Dendritic cell treated with granulocyte-macrophage colony-stimulating factor and Interleukin-4, amounts not matched to agents 40 ng/mL and 50 ng/mL, for 4 days (primary cell): ENCODE measurements at regions of chr6 and their contacts with region 1.

Region 1: GRCh38 chr6:30396833-30397479 is 52.0 kb downstream of the RPP21 start:
- H3K4me3 Mint-ChIP-seq: no peak overlapping the region
- H3K27ac Mint-ChIP-seq: no peak overlapping the region
- H3K4me1 Mint-ChIP-seq: no peaks in the 10 kb centered on the region
- H3K27me3 Mint-ChIP-seq: peaks cover 65% of the 10 kb centered on the region

Region 2: GRCh38 chr6:29964518-29964886 is 432.5 kb before region 1 on chr6:
- intact Hi-C with region 1: no loop called
- H3K4me3 Mint-ChIP-seq: peak overlapping the region; percentile 71
- H3K27ac Mint-ChIP-seq: peak overlapping the region; percentile 87
- H3K4me1 Mint-ChIP-seq: peaks cover 74% of the 10 kb centered on the region
- H3K27me3 Mint-ChIP-seq: no peaks in the 10 kb centered on the region

Region 3: DNA sequence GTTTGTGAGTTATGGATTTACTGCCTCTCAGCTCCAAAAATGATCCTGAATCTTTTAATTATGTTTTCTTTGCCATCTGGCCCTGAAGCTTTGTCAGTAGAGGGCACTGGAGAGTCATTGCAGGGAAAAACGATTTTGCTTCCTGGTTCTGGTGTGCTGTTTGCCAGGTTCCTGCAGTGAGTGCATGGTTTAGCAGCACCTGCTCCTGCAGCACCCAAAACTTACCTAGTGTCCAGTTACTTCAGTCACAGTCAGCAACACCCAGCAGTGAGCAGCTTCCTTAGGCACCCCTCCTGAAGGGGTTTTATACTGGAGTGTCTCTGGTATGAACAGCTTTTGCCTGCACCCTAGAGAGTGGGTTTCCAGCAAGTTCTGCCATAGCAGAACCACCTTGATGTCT is 177.7 kb before region 1 on chr6:
- intact Hi-C with region 1: loop called (anchors 1 kb)
- H3K4me3 Mint-ChIP-seq: no peak overlapping the region
- H3K27ac Mint-ChIP-seq: no peak overlapping the region
- H3K4me1 Mint-ChIP-seq: peaks cover 13% of the 10 kb centered on the region
- H3K27me3 Mint-ChIP-seq: peaks cover 22% of the 10 kb centered on the region

Region 4: GRCh38 chr6:30238174-30238795 is 158.7 kb before region 1 on chr6:
- intact Hi-C with region 1: loop called (anchors 2 kb)
- H3K4me3 Mint-ChIP-seq: no peak overlapping the region
- H3K27ac Mint-ChIP-seq: no peak overlapping the region
- H3K4me1 Mint-ChIP-seq: peaks cover 10% of the 10 kb centered on the region
- H3K27me3 Mint-ChIP-seq: peaks cover 36% of the 10 kb centered on the region

Region 5: DNA sequence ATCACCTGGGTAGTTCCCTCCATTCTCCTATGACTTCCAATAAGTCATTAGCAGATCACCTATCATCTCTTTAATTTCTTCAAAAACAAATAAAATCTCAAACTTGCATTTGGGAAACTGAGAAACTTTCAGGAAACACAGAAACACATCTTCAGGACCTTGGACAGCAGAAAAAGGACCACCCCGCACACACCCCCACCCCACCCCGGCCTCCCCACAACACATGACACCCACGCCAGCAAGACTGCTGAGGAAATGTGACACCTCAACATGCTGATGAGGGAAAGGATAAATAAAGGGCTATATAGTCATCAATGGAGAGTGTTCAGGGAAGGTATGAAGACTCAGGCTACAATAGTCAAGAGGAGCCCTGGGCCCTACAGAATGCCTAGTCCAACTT is 85.9 kb before region 1 on chr6:
- intact Hi-C with region 1: no loop called
- H3K4me3 Mint-ChIP-seq: no peak overlapping the region
- H3K27ac Mint-ChIP-seq: no peak overlapping the region
- H3K4me1 Mint-ChIP-seq: peaks cover 18% of the 10 kb centered on the region
- H3K27me3 Mint-ChIP-seq: no peaks in the 10 kb centered on the region

Region 6: DNA sequence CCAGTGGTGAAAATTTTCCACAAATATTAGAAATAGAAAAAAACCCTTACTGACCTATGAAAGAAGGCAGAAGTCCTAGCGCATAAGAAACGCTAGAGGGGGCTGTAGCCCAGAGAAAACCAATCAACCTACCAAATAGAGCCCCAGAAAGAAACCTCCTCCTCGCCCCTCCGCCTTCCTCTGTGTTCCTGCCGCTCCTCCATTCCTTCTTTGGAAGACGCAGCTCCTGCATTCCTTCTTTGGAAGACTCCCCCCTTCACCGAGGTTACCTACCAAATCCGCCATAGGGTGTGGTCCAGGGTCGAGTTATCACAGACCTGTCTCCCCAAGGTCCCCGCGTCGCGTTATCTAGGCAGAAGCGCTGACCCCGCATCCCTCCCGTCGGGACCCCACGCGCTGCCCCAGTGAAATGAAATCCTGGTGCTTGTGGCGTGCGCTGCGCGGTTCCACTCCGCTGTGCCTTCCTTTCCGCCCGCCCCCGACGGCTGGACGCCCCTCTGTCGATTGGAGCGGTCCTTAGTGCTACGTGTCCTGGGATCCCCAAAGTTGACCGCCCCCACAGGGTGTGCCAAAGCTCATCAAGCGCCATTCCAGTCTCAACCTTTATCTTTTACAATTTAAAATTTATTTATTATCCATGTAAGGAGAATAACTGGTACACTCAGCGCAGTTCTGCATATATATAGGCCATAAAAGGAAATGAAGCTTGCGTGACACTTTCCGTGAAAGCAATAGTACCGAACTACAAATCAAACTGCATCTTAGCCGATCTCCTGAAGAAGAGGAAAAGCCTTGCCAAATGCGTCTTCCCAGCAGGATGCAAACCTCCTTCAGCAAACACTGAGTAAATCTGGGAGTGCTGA is 39.0 kb before region 1 on chr6:
- intact Hi-C with region 1: loop called (anchors 1 kb)
- H3K4me3 Mint-ChIP-seq: peak overlapping the region; percentile 62
- H3K27ac Mint-ChIP-seq: no peak overlapping the region
- H3K4me1 Mint-ChIP-seq: peaks cover 7% of the 10 kb centered on the region
- H3K27me3 Mint-ChIP-seq: peaks cover 78% of the 10 kb centered on the region